MCF 10A (cell line): ENCODE measurements at regions of chr1 and their contacts with region 1.

Region 1: GRCh38 chr1:220217383-220217988 is 54.8 kb downstream of the RAB3GAP2 start:
- DNase-seq: peak; percentile 55
- H3K4me3 Mint-ChIP-seq: no peak overlapping the region
- H3K27ac Mint-ChIP-seq: no peak overlapping the region
- H3K4me1 Mint-ChIP-seq: peaks cover 25% of the 10 kb centered on the region
- H3K27me3 Mint-ChIP-seq: no peaks in the 10 kb centered on the region
- CTCF ChIP-seq: peak; percentile 52

Region 2: DNA sequence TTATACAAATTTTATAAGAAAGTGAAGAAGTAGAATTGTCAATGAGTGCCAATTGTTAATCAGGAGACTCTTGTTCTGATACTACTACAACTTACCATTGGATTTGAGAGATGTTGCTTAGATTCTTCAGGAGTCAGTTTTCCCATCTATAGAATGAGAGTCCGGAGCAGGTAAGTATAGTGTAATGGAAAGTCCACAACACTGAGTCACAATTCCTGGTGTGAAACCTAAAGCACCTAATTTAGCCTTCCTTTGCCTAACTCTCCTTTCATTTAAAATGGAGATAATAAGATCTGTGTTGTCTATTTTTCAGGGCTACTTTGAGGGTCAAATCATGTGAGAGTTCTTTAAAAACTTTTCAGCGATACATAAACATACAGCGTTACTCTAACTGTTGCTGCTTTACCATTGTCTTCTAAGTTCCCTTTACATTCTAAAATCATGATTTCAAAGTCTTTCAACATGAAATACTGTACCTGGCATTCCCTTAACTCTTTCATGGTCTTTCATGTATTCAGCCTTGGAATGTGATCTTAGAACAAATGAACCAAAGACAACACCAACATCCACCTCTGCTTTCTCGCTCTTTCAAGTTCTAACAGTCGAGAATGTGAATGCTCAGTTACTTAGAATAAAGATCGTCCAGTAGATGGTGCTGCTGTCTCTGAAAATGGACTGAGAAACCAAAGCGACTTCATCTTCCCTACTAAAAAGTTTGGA is 380.1 kb before region 1 on chr1:
- CTCF ChIA-PET with region 1: interaction called, 4 read pairs
- POLR2A ChIA-PET with region 1: no interaction called
- intact Hi-C with region 1: loop called (anchors 5 kb)
- DNase-seq: peak; percentile 85
- H3K4me3 Mint-ChIP-seq: no peak overlapping the region
- H3K27ac Mint-ChIP-seq: no peak overlapping the region
- H3K4me1 Mint-ChIP-seq: no peaks in the 10 kb centered on the region
- H3K27me3 Mint-ChIP-seq: peaks cover 95% of the 10 kb centered on the region
- CTCF ChIP-seq: peak; percentile 85

Region 3: GRCh38 chr1:220198186-220199005 is 19.1 kb before region 1 on chr1:
- CTCF ChIA-PET with region 1: interaction called, 73 read pairs
- POLR2A ChIA-PET with region 1: interaction called, 4 read pairs
- intact Hi-C with region 1: no loop called
- DNase-seq: no peak
- H3K4me3 Mint-ChIP-seq: no peak overlapping the region
- H3K27ac Mint-ChIP-seq: no peak overlapping the region
- H3K4me1 Mint-ChIP-seq: no peaks in the 10 kb centered on the region
- H3K27me3 Mint-ChIP-seq: no peaks in the 10 kb centered on the region
- CTCF ChIP-seq: no peak

Region 4: DNA sequence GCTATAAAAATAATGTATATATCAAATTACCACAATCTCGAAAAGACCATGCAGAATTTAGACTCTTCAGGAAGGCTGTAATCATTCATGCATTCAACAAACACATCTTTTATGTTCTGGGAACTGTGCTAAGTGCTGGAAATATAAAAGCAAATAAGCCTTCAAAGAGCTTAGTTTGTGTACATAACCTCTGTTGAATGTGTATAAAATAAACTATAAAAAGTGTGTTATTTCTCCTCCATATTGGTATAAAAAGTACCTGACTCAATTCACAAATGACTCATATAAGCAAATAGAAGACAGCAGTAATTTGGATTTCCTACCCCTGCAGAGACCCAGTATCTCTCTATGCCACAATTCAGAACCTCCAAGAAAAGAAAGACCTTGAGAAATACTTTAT is 18.0 kb after region 1 on chr1:
- CTCF ChIA-PET with region 1: interaction called, 232 read pairs
- POLR2A ChIA-PET with region 1: interaction called, 9 read pairs
- intact Hi-C with region 1: no loop called
- DNase-seq: peak; percentile 17
- H3K4me3 Mint-ChIP-seq: no peak overlapping the region
- H3K27ac Mint-ChIP-seq: no peak overlapping the region
- H3K4me1 Mint-ChIP-seq: peaks cover 6% of the 10 kb centered on the region
- H3K27me3 Mint-ChIP-seq: no peaks in the 10 kb centered on the region
- CTCF ChIP-seq: no peak

Region 5: DNA sequence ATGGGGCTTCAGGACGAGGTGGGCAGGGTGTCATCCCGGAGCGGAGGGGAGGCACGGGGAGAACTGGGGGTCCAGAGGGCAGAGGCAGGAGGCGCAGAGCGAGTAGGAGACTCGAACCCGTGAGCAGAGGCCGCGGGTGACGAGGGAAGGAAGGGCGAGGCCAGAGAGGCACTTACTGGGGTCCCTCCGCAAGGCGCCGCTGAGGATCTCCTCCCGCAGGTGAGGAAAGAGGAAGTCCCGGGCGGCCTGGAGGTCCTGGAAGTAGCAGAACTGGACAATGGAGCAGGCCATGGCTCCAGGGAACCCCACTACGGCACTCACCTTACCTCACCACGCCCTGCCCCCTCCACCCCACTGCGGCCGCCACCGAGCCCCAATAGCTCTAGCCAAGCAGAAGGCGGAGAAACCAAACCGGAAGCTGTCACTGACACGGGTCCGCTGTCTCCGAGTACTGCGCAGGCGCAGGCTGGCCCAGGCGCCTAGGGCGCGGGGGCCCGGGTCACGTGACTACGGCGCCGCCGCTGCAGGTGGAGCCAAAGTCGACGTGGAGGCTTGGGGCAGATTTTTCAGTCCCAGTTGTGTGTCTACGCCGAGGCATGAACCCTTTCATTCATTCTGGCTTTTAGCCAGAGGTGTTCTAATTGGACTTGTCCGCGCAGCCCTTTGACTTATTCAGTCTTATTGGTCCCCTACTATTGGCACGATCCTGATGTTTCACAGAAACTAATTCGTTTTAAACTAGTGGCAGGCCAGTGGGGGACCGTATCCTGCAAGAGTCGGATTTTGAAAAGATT is 54.8 kb after region 1 on chr1 and contains the start of gene RAB3GAP2:
- CTCF ChIA-PET with region 1: interaction called, 75 read pairs
- POLR2A ChIA-PET with region 1: interaction called, 16 read pairs
- intact Hi-C with region 1: loop called (anchors 2 kb)
- DNase-seq: peak; percentile 99
- H3K4me3 Mint-ChIP-seq: no peak within 1 kb of the TSS
- H3K27ac Mint-ChIP-seq: no peak within 1 kb of the TSS
- H3K4me1 Mint-ChIP-seq: peaks cover 11% of the 10 kb centered on the region
- H3K27me3 Mint-ChIP-seq: peaks cover 18% of the 10 kb centered on the region
- CTCF ChIP-seq: no peak
- total RNA-seq, gene RAB3GAP2: 93.3 and 97.6 TPM in 2 replicates

Region 6: GRCh38 chr1:220527908-220528678 is 310.6 kb after region 1 on chr1 and contains the start of gene MARK1:
- CTCF ChIA-PET with region 1: no interaction called
- POLR2A ChIA-PET with region 1: interaction called, 3 read pairs
- intact Hi-C with region 1: loop called (anchors 10 kb)
- DNase-seq: peak; percentile 76
- H3K4me3 Mint-ChIP-seq: peak within 1 kb of the TSS; percentile 76
- H3K27ac Mint-ChIP-seq: peak within 1 kb of the TSS; percentile 66
- H3K4me1 Mint-ChIP-seq: peaks cover 21% of the 10 kb centered on the region
- H3K27me3 Mint-ChIP-seq: no peaks in the 10 kb centered on the region
- CTCF ChIP-seq: no peak
- total RNA-seq, gene MARK1: 7.5 and 12.9 TPM in 2 replicates

Region 7: GRCh38 chr1:220786337-220787068 is 569.0 kb after region 1 on chr1 and contains the start of gene MTARC1:
- CTCF ChIA-PET with region 1: interaction called, 10 read pairs
- POLR2A ChIA-PET with region 1: no interaction called
- intact Hi-C with region 1: no loop called
- DNase-seq: peak; percentile 76
- H3K4me3 Mint-ChIP-seq: peak within 1 kb of the TSS; percentile 61
- H3K27ac Mint-ChIP-seq: no peak within 1 kb of the TSS
- H3K4me1 Mint-ChIP-seq: peaks cover 17% of the 10 kb centered on the region
- H3K27me3 Mint-ChIP-seq: no peaks in the 10 kb centered on the region
- CTCF ChIP-seq: peak; percentile 22
- total RNA-seq, gene MTARC1: 0.96 and 1.5 TPM in 2 replicates